ENCODE measurements at regions of chr3 and their contacts with region 1.

Region 1: GRCh38 chr3:29693863-29694262 is 413.0 kb downstream of the RBMS3 start:
- DNase-seq: no peak
- H3K4me3 ChIP-seq: no peak overlapping the region
- H3K27ac ChIP-seq: peak overlapping the region; percentile 79 to 86 (median 80)
- H3K4me1 ChIP-seq: peaks cover 27 to 70% (median 63%) of the 10 kb centered on the region in 4 donors
- H3K27me3 ChIP-seq: no peaks in the 10 kb centered on the region
- CTCF ChIP-seq: no peak
- EP300 ChIP-seq: no peak
- POLR2A ChIP-seq: no peak

Region 2: DNA sequence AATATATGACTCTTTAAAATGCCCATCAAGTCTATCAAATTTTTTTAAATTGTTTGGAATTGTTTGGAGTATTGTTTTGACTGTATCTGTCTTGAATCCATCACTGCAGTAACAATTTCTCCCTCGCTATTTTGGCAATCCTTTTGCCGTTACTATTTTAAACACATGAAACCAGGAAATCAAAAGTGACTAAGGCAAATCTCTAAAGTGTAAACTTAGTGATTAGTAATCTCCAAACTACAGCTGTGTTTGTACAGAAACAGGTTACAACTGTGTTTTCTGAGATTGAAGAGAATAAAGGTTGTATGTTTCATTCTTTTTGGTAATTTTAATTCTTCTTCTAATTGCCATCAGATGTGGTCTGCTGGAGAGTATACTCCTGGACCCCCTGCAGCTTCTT is 52.3 kb after region 1 on chr3:
- intact Hi-C with region 1: loop called (anchors 10 kb)
- DNase-seq: no peak
- H3K4me3 ChIP-seq: no peak overlapping the region
- H3K27ac ChIP-seq: peak overlapping the region in 2 of 4 donors; percentile 37 to 40
- H3K4me1 ChIP-seq: peaks cover 15 to 59% (median 51%) of the 10 kb centered on the region in 4 donors
- H3K27me3 ChIP-seq: no peaks in the 10 kb centered on the region
- CTCF ChIP-seq: no peak
- EP300 ChIP-seq: no peak
- POLR2A ChIP-seq: no peak

Region 3: DNA sequence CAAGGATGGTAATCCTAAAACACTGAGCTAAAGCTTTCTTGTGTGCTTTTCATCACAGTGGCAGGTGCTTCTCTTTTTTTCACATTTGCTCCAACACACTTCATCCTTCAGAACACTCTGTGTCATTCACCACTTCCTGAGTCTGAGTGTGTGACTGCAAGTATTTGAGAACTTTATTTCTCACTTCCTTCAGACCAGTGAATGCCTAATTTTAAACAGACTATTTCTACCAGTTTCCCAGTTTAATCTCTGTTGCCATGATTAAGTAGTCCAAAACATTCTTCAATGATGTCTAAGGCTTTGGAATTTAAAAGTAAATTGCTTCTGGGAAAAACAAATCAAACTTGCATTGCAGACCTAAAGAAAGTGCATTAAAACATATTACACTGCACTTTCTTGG is 128.2 kb after region 1 on chr3:
- intact Hi-C with region 1: no loop called
- DNase-seq: no peak
- H3K4me3 ChIP-seq: no peak overlapping the region
- H3K27ac ChIP-seq: no peak overlapping the region
- H3K4me1 ChIP-seq: no peaks in the 10 kb centered on the region
- H3K27me3 ChIP-seq: no peaks in the 10 kb centered on the region
- CTCF ChIP-seq: no peak
- EP300 ChIP-seq: no peak
- POLR2A ChIP-seq: no peak

Region 4: DNA sequence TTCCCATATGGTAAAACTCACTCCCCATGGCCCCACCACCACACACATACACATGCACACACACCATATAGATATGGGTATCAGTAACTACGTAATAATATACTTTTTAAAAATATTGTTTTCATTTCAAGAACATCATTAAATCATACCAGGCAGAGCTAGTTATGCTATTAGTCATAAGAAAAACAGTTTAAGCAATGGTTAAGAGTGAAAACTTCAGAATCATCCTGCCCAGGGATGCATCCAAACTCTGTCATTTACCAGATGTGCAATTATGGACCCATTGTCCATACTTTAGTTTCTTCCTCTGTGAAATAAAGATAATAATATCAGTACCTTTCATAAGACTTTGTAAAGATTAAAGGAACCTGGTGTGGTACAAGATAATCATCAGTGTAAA is 195.4 kb after region 1 on chr3:
- intact Hi-C with region 1: no loop called
- DNase-seq: no peak
- H3K4me3 ChIP-seq: no peak overlapping the region
- H3K27ac ChIP-seq: no peak overlapping the region
- H3K4me1 ChIP-seq: no peaks in the 10 kb centered on the region
- H3K27me3 ChIP-seq: no peaks in the 10 kb centered on the region
- CTCF ChIP-seq: no peak
- EP300 ChIP-seq: no peak
- POLR2A ChIP-seq: no peak